MCF 10A (cell line): ENCODE measurements at regions of chr13 and their contacts with region 1.

Region 1: GRCh38 chr13:109256866-109257760 is 529.3 kb downstream of the IRS2 start:
- DNase-seq: peak; percentile 99
- H3K4me3 Mint-ChIP-seq: peak overlapping the region; percentile 48
- H3K27ac Mint-ChIP-seq: peak overlapping the region; percentile 96
- H3K4me1 Mint-ChIP-seq: peaks cover 47% of the 10 kb centered on the region
- H3K27me3 Mint-ChIP-seq: no peaks in the 10 kb centered on the region
- CTCF ChIP-seq: no peak

Region 2: GRCh38 chr13:108877300-108877699 is 379.8 kb before region 1 on chr13:
- CTCF ChIA-PET with region 1: no interaction called
- POLR2A ChIA-PET with region 1: no interaction called
- intact Hi-C with region 1: no loop called
- DNase-seq: peak; percentile 23
- H3K4me3 Mint-ChIP-seq: no peak overlapping the region
- H3K27ac Mint-ChIP-seq: no peak overlapping the region
- H3K4me1 Mint-ChIP-seq: no peaks in the 10 kb centered on the region
- H3K27me3 Mint-ChIP-seq: peaks cover 39% of the 10 kb centered on the region
- CTCF ChIP-seq: no peak

Region 3: GRCh38 chr13:109151255-109151654 is 105.9 kb before region 1 on chr13:
- CTCF ChIA-PET with region 1: interaction called, 8 read pairs
- POLR2A ChIA-PET with region 1: interaction called, 23 read pairs
- intact Hi-C with region 1: loop called (anchors 5 kb)
- DNase-seq: peak; percentile 49
- H3K4me3 Mint-ChIP-seq: no peak overlapping the region
- H3K27ac Mint-ChIP-seq: peak overlapping the region; percentile 77
- H3K4me1 Mint-ChIP-seq: peaks cover 57% of the 10 kb centered on the region
- H3K27me3 Mint-ChIP-seq: no peaks in the 10 kb centered on the region
- CTCF ChIP-seq: no peak

Region 4: DNA sequence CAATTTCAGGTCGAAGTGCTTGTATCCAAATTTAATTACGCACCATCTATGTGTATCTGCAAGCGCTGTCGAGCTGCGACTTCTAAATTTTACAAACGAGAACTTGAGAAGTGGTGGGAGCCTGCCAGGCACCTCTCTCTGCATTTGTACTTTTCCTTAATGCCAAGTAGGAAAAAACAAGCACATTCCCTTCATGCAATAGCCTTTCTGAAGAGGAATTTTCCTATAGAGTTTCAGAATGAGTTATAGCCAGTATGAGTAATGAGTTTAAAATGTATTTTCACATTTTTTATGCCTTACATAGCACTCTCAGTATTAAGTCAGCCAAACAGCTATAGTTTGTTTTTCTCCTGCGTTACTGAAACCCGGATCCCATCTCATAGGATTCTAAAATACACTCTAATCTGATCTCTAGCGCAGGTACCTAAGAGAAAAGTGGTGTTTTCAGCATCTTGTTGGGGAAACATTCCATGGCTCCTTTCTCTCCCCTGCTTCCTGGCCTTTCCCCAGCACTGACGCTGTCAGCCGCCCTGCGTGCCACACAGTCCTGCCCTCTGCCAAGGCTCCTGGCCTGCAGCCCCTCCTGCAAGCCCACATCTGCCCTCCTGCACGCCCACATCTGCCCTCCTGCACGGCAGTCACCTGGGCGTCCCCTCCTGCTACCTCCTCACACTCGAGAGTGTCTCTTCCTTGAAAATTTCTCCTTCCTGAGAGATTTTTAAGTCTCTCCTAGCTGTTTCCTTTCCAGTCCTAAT is 100.8 kb before region 1 on chr13:
- CTCF ChIA-PET with region 1: no interaction called
- POLR2A ChIA-PET with region 1: interaction called, 22 read pairs
- intact Hi-C with region 1: no loop called
- DNase-seq: peak; percentile 82
- H3K4me3 Mint-ChIP-seq: peak overlapping the region; percentile 64
- H3K27ac Mint-ChIP-seq: peak overlapping the region; percentile 95
- H3K4me1 Mint-ChIP-seq: peaks cover 61% of the 10 kb centered on the region
- H3K27me3 Mint-ChIP-seq: no peaks in the 10 kb centered on the region
- CTCF ChIP-seq: no peak

Region 5: GRCh38 chr13:109211616-109212015 is 45.5 kb before region 1 on chr13:
- CTCF ChIA-PET with region 1: no interaction called
- POLR2A ChIA-PET with region 1: interaction called, 3 read pairs
- intact Hi-C with region 1: loop called (anchors 10 kb)
- DNase-seq: peak; percentile 59
- H3K4me3 Mint-ChIP-seq: no peak overlapping the region
- H3K27ac Mint-ChIP-seq: peak overlapping the region; percentile 72
- H3K4me1 Mint-ChIP-seq: peaks cover 18% of the 10 kb centered on the region
- H3K27me3 Mint-ChIP-seq: no peaks in the 10 kb centered on the region
- CTCF ChIP-seq: no peak

Region 6: DNA sequence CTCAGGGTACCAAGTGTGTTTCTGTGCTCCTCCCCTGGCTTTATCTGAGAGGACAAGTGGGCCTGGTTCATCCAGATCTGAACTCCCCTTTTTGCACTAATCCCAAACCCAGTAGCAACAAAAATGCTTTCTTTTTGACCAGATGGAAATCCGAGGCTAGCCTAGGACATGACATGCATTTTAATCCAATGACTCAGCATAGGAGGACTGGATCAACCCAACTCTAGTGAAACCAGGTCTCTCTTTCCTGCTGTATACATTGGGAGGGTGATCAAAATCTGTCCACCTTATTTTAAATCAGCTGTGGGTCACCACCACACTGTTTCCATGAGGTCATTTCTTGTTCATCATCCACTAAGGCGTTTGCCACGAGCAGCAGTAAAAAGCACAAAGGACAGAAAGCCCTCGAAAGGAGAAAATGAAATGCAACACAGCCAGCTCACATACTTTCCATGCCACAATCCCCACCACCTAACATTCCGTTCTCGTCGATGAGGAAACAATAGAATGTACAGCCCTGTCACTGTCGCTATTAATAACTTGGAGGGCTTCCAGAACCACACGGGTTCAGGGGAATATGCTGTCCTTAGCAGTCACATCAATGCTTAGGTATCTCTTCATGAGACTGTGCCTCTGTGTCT is 13.7 kb before region 1 on chr13:
- CTCF ChIA-PET with region 1: interaction called, 3 read pairs
- POLR2A ChIA-PET with region 1: interaction called, 30 read pairs
- intact Hi-C with region 1: no loop called
- DNase-seq: peak; percentile 79
- H3K4me3 Mint-ChIP-seq: peak overlapping the region; percentile 67
- H3K27ac Mint-ChIP-seq: peak overlapping the region; percentile 89
- H3K4me1 Mint-ChIP-seq: peaks cover 34% of the 10 kb centered on the region
- H3K27me3 Mint-ChIP-seq: no peaks in the 10 kb centered on the region
- CTCF ChIP-seq: no peak

Region 7: DNA sequence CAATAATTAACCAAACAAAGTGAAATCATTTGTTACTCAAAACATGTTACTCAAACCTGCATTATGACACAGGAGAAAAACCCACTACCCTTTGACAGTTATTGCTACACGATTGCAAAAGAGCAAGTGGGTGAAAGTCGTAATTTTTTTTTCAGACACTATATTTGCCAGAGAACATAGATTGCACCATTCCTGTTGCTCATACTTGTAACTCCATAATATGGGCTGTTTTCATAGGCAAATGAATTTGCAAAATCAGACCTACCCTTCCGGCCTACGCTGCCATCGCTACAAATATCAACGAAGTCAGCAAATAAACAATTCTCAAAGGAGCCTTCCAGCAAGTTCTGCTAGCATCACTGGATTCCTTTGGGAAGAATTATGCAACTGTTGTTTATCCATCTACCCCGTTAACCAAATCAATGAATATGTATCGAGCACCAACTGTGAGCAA is 132.8 kb after region 1 on chr13:
- CTCF ChIA-PET with region 1: no interaction called
- POLR2A ChIA-PET with region 1: no interaction called
- intact Hi-C with region 1: loop called (anchors 5 kb)
- DNase-seq: peak; percentile 94
- H3K4me3 Mint-ChIP-seq: peak overlapping the region; percentile 54
- H3K27ac Mint-ChIP-seq: peak overlapping the region; percentile 95
- H3K4me1 Mint-ChIP-seq: peaks cover 21% of the 10 kb centered on the region
- H3K27me3 Mint-ChIP-seq: no peaks in the 10 kb centered on the region
- CTCF ChIP-seq: no peak